Activated CD8-positive, alpha-beta T cell treated with anti-CD3 and anti-CD28 coated beads, Interleukin-2, amount 10 ng/mL, durations not matched to agents 7 days and 5 days (primary cell): ENCODE measurements at regions of chr12 and their contacts with region 1.

Region 1: GRCh38 chr12:54497883-54498282 is 331 bp downstream of the NCKAP1L start:
- DNase-seq: no peak
- ATAC-seq: no peak
- H3K4me3 Mint-ChIP-seq: peak overlapping the region; percentile 96
- H3K27ac Mint-ChIP-seq: peak overlapping the region; percentile 95
- H3K4me1 Mint-ChIP-seq: peaks cover 43% of the 10 kb centered on the region
- H3K27me3 Mint-ChIP-seq: no peaks in the 10 kb centered on the region

Region 2: GRCh38 chr12:54419088-54419892 is 78.6 kb before region 1 on chr12 and contains the start of gene ITGA5:
- CTCF ChIA-PET with region 1: no interaction called
- POLR2A ChIA-PET with region 1: interaction called, 14 read pairs
- DNase-seq: no peak
- ATAC-seq: peak; percentile 54
- H3K4me3 Mint-ChIP-seq: peak within 1 kb of the TSS; percentile 94
- H3K27ac Mint-ChIP-seq: peak within 1 kb of the TSS; percentile 91
- H3K4me1 Mint-ChIP-seq: peaks cover 54% of the 10 kb centered on the region
- H3K27me3 Mint-ChIP-seq: peaks cover 28% of the 10 kb centered on the region
- total RNA-seq, gene ITGA5: 65.0 to 69.1 TPM

Region 3: GRCh38 chr12:54849441-54849840 is 351.6 kb after region 1 on chr12:
- CTCF ChIA-PET with region 1: no interaction called
- POLR2A ChIA-PET with region 1: no interaction called
- DNase-seq: no peak
- ATAC-seq: no peak
- H3K4me3 Mint-ChIP-seq: no peak overlapping the region
- H3K27ac Mint-ChIP-seq: no peak overlapping the region
- H3K4me1 Mint-ChIP-seq: peaks cover 4% of the 10 kb centered on the region
- H3K27me3 Mint-ChIP-seq: peaks cover 2% of the 10 kb centered on the region